Calu3 (cell line): ENCODE measurements at regions of chr12 and their contacts with region 1.

Region 1: GRCh38 chr12:83945871-83946270 is 966.7 kb downstream of the SLC6A15 start:
- DNase-seq: no peak
- H3K4me3 Mint-ChIP-seq: no peak overlapping the region
- H3K27ac Mint-ChIP-seq: no peak overlapping the region
- H3K4me1 Mint-ChIP-seq: peaks cover 9% of the 10 kb centered on the region
- H3K27me3 Mint-ChIP-seq: no peaks in the 10 kb centered on the region
- CTCF ChIP-seq: no peak

Region 2: DNA sequence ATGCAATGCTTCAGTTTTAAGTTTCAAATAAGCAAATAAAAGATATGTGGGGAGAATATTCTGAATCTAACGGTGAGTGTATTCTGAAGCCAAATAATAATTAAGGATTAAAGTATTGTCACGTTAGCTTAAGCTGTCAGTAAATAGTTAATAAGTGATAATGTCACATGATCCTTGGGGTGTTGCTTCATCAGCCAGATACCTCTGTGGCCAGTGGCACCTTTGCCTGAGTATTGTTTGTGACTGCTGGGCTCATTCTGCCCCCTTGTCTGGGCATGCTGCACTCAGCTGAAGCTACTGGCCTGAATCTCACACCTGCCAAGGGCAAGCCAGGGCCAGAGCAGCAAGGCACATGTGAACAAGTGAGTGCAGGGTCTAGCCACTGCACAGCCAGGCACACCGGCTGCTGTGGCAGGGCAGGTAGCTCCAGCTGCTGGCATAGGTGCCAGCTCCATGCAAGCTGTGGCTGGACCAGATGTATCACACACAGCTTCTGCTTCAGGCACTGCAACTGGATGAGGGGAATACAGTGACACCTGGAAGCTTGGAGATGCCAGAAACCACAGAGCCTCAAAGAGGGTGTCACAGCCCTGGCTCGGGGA is 227.1 kb after region 1 on chr12:
- CTCF ChIA-PET with region 1: no interaction called
- intact Hi-C with region 1: loop called (anchors 10 kb)
- DNase-seq: no peak
- H3K4me3 Mint-ChIP-seq: no peak overlapping the region
- H3K27ac Mint-ChIP-seq: no peak overlapping the region
- H3K4me1 Mint-ChIP-seq: no peaks in the 10 kb centered on the region
- H3K27me3 Mint-ChIP-seq: no peaks in the 10 kb centered on the region
- CTCF ChIP-seq: no peak